ENCODE measurements at regions of chr14 and their contacts with region 1.

Region 1: GRCh38 chr14:60184146-60184904 is 19.1 kb upstream of the DHRS7 start:
- DNase-seq: no peak
- ATAC-seq: peak; percentile 71

Region 2: GRCh38 chr14:59964251-59965007 is 219.9 kb before region 1 on chr14:
- intact Hi-C with region 1: loop called (anchors 5 kb)
- DNase-seq: no peak
- ATAC-seq: no peak

Region 3: GRCh38 chr14:60008042-60008441 is 176.3 kb before region 1 on chr14:
- intact Hi-C with region 1: no loop called
- DNase-seq: no peak
- ATAC-seq: no peak

Region 4: GRCh38 chr14:60064491-60065072 is 119.7 kb before region 1 on chr14:
- intact Hi-C with region 1: loop called (anchors 5 kb)
- DNase-seq: no peak
- ATAC-seq: peak; percentile 62

Region 5: DNA sequence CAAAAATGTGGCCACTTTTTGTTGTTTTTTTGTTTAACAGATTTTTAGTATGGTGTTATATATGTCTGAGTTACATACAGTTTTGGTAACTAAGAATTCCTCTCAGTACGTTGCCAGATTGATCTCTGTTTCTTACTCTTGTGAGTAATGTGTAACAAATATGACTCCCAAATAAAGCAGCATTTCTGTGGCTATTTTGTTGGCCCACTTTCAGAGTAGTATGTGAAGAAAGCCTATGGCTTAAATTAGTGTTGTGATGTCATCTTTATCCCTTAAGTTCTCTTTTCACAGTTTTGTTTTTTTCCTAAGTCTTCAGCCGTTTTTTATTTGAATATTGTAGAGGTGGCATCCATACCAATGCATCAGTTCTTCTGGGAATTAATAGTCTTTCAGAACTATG is 81.9 kb before region 1 on chr14:
- intact Hi-C with region 1: no loop called
- DNase-seq: no peak
- ATAC-seq: no peak

Measured in Right ventricle myocardium superior (tissue), 1 donor.